BJ (cell line): ENCODE measurements at regions of chr10 and their contacts with region 1.

Region 1: DNA sequence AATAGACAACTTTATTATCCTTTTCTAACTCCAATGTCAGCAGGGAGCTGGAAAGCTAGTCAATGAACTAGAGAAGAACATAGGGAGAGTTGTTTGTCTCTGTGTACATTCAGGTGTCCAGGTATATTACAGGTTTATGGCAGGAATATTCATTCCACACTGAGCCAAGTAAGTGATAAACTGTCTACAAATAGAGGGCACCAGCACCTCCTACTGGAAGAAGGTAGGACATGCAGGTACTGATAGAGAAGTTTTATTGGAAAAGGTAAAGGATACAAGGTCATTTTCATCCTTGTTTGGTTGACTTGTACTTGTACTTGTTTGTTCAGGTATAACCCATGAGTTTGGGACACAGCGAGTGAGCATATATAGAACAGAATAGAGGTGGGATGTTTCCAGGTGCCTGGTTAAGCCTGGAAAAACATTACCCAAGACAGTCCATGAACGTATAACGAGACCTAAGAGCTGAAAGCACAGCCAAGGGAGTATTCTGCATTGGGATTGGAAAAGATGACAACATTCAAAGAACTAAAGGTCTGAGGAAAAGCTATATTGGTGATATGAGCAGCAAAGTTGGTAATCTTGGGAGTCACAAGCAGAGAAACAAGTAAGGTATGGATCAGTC is 61.4 kb upstream of the PPP1R3C start:
- DNase-seq: no peak
- H3K4me3 ChIP-seq: no peak overlapping the region
- H3K27me3 ChIP-seq: no peaks in the 10 kb centered on the region
- CTCF ChIP-seq: peak; percentile 82

Region 2: GRCh38 chr10:91493313-91493712 is 201.0 kb before region 1 on chr10:
- CTCF ChIA-PET with region 1: interaction called, 10 read pairs
- POLR2A ChIA-PET with region 1: no interaction called
- DNase-seq: no peak
- H3K4me3 ChIP-seq: no peak overlapping the region
- H3K27me3 ChIP-seq: no peaks in the 10 kb centered on the region
- CTCF ChIP-seq: peak; percentile 37

Region 3: DNA sequence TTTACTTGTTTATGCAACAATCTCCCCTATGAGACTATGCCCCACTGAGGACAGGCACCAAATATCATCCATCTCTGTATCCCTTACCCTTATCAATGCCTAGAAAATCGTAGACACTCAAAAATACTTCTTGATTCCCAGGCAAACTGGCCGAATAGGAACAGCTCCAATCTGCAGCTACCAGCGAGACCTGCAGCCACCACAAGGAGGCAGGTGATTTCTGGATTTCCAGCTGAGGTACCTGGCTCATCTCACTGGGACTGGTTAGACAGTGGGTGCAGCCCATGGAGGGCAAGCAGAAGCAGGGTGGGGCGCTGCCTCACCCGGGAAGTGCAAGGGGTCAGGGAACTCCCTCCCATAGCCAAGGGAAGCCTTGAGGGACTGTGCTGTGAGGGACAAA is 50.6 kb before region 1 on chr10:
- CTCF ChIA-PET with region 1: interaction called, 14 read pairs
- POLR2A ChIA-PET with region 1: no interaction called
- DNase-seq: no peak
- H3K4me3 ChIP-seq: no peak overlapping the region
- H3K27me3 ChIP-seq: no peaks in the 10 kb centered on the region
- CTCF ChIP-seq: peak; percentile 29; the same call in 1 of the 2 replicates